HepG2 (cell line): ENCODE measurements at regions of chr19 and their contacts with region 1.

Region 1: DNA sequence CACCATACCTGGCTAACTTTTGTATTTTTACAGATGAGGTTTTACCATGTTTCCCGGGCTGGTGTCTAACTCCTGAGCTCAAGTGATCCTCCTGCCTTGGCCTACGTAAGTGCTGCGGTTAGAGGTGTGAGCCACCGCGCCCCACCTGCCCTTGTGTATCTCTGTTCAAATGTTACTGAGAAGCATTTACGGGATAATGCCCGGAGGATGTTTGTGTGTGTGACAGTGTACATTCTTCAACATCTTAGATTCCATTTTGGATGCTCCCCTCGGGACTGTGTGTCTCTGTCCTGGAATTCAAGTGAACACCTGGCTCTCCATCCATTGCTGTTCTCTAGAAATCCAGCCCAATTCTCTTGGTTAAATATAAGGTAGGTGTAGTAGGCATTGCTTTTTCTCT is 93.7 kb downstream of the NLRP12 start:
- DNase-seq: no peak
- ATAC-seq: no peak
- H3K4me3 ChIP-seq: no peak overlapping the region
- H3K27ac ChIP-seq: no peak overlapping the region
- H3K4me1 ChIP-seq: no peaks in the 10 kb centered on the region
- H3K27me3 ChIP-seq: peaks cover 0 to 16% of the 10 kb centered on the region in 2 experiments; a peak in 2 of 5 replicates
- CTCF ChIP-seq: no peak
- EP300 ChIP-seq: no peak
- POLR2A ChIP-seq: no peak
- RAD21 ChIP-seq: no peak

Region 2: GRCh38 chr19:53195265-53195903 is 535.0 kb before region 1 on chr19:
- CTCF ChIA-PET with region 1: no interaction called
- POLR2A ChIA-PET with region 1: no interaction called
- in situ Hi-C with region 1: loop called (anchors 25 kb)
- intact Hi-C with region 1: no loop called
- DNase-seq: peak; percentile 67
- ATAC-seq: peak; percentile 65
- H3K4me3 ChIP-seq: no peak overlapping the region
- H3K27ac ChIP-seq: no peak overlapping the region
- H3K4me1 ChIP-seq: no peaks in the 10 kb centered on the region
- H3K27me3 ChIP-seq: no peaks in the 10 kb centered on the region; a peak in 1 of 5 replicates
- CTCF ChIP-seq: peak; percentile 88
- EP300 ChIP-seq: no peak
- POLR2A ChIP-seq: no peak
- RAD21 ChIP-seq: peak; percentile 55; the same call in 1 of the 2 replicates

Region 3: GRCh38 chr19:53571390-53571789 is 159.0 kb before region 1 on chr19:
- CTCF ChIA-PET with region 1: no interaction called
- POLR2A ChIA-PET with region 1: no interaction called
- in situ Hi-C with region 1: no loop called
- intact Hi-C with region 1: no loop called
- DNase-seq: no peak
- ATAC-seq: no peak
- H3K4me3 ChIP-seq: no peak overlapping the region
- H3K27ac ChIP-seq: no peak overlapping the region
- H3K4me1 ChIP-seq: peaks cover 30% of the 10 kb centered on the region
- H3K27me3 ChIP-seq: no peaks in the 10 kb centered on the region
- CTCF ChIP-seq: no peak
- EP300 ChIP-seq: no peak
- POLR2A ChIP-seq: no peak
- RAD21 ChIP-seq: no peak

Region 4: GRCh38 chr19:53792721-53793433 is 62.5 kb after region 1 on chr19:
- CTCF ChIA-PET with region 1: no interaction called
- POLR2A ChIA-PET with region 1: no interaction called
- in situ Hi-C with region 1: no loop called
- intact Hi-C with region 1: no loop called
- DNase-seq: peak; percentile 88
- ATAC-seq: peak; percentile 97
- H3K4me3 ChIP-seq: no peak overlapping the region
- H3K27ac ChIP-seq: no peak overlapping the region
- H3K4me1 ChIP-seq: peaks cover 41% of the 10 kb centered on the region
- H3K27me3 ChIP-seq: no peaks in the 10 kb centered on the region
- CTCF ChIP-seq: peak; percentile 98
- EP300 ChIP-seq: no peak
- POLR2A ChIP-seq: no peak
- RAD21 ChIP-seq: peak; percentile 97